ENCODE measurements at regions of chr11 and their contacts with region 1.

Region 1: DNA sequence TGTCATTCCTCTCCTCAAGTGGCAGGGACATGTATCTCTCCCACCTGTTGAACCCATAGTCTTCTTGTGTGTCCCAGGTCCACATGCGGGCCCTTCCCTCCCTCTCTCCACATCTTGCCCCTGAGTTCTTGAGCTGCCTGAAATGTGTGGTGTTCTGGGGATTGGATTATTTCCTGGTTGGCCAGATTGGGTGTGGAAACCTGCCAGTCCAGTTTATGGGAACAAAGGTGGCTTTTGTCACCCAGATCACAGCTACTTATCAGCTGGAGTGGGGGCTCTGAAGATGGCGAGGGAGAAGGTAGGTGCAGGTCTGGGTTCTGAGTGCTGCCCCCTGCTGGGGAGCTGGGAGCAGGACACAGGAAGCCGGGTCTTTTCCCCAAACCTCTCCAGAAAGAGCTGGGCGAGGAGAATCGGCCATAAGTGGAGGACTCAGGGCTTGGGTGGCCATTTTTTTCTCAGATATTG is 14.2 kb downstream of the DTX4 start:
- DNase-seq: peak; percentile 55
- H3K4me3 Mint-ChIP-seq: no peak overlapping the region
- H3K27ac Mint-ChIP-seq: no peak overlapping the region
- H3K4me1 Mint-ChIP-seq: peaks cover 14% of the 10 kb centered on the region
- H3K27me3 Mint-ChIP-seq: no peaks in the 10 kb centered on the region
- CTCF ChIP-seq: peak; percentile 61

Region 2: DNA sequence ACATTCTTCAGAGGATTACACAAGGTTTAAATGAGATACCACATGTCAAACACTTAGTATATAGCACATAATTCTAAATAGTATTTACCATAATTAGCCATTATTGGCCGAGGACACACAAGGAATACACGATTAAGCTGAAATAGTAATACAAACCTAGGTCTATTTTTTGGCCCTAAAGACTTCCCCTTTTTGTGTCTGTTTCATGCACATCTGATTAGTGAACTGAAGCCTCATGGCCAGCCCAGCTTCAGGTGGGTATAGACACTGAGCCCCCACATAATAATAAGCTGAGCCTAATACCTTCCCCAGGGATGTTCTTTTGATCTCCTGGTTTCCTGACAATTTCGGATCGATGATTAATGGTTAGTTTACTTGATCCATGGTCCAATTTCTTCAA is 98.0 kb before region 1 on chr11:
- CTCF ChIA-PET with region 1: no interaction called
- POLR2A ChIA-PET with region 1: no interaction called
- intact Hi-C with region 1: no loop called
- DNase-seq: no peak
- H3K4me3 Mint-ChIP-seq: no peak overlapping the region
- H3K27ac Mint-ChIP-seq: no peak overlapping the region
- H3K4me1 Mint-ChIP-seq: no peaks in the 10 kb centered on the region
- H3K27me3 Mint-ChIP-seq: peaks cover 83% of the 10 kb centered on the region
- CTCF ChIP-seq: no peak

Region 3: GRCh38 chr11:59197991-59198390 is 11.8 kb after region 1 on chr11:
- CTCF ChIA-PET with region 1: interaction called, 530 read pairs
- POLR2A ChIA-PET with region 1: no interaction called
- intact Hi-C with region 1: no loop called
- DNase-seq: no peak
- H3K4me3 Mint-ChIP-seq: no peak overlapping the region
- H3K27ac Mint-ChIP-seq: peak overlapping the region; percentile 17
- H3K4me1 Mint-ChIP-seq: peaks cover 14% of the 10 kb centered on the region
- H3K27me3 Mint-ChIP-seq: no peaks in the 10 kb centered on the region
- CTCF ChIP-seq: no peak

Region 4: DNA sequence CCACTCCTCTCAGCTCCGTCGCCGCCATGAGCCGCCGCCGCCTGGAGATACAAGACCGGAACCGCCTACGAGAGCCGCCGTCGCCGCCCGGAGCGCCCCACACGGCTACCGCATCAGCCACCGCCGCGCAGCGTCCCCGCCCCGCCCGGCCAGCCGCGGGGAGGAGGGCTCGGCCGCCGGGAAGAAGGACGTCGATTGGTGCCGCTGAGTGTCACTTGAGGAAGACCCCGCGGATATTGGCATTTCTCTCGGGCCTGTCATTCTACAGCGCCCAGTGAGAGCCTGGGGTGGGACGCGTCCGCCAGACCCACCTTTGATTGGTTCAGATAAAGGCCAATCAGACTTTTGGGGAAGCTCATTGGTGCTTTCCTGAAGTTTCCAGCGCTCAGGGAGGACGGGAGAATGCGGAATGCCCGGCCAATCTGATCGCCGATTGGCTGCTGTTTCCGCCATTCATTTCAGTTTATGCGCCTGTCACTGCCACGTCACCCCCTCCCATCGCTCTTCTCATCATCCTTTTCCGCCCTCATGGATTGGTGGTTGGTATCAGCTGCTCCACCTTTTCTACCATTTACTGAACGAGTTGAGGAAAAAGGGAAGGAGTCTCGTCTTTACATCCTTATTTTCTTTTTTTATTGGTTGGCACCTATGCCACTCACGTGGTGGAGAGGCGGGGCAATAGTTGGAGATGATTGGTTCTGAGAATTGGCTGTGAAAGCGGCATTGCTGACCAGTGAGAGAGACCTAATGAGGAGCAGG is 429.7 kb after region 1 on chr11 and contains the start of gene OSBP:
- CTCF ChIA-PET with region 1: no interaction called
- POLR2A ChIA-PET with region 1: no interaction called
- intact Hi-C with region 1: no loop called
- DNase-seq: peak; percentile 100
- H3K4me3 Mint-ChIP-seq: peak within 1 kb of the TSS; percentile 77
- H3K27ac Mint-ChIP-seq: peak within 1 kb of the TSS; percentile 89
- H3K4me1 Mint-ChIP-seq: peaks cover 24% of the 10 kb centered on the region
- H3K27me3 Mint-ChIP-seq: no peaks in the 10 kb centered on the region
- CTCF ChIP-seq: no peak
- total RNA-seq, gene OSBP: 73.7 and 76.1 TPM in 2 replicates